BJ (cell line): ENCODE measurements at regions of chr10 and their contacts with region 1.

Region 1: DNA sequence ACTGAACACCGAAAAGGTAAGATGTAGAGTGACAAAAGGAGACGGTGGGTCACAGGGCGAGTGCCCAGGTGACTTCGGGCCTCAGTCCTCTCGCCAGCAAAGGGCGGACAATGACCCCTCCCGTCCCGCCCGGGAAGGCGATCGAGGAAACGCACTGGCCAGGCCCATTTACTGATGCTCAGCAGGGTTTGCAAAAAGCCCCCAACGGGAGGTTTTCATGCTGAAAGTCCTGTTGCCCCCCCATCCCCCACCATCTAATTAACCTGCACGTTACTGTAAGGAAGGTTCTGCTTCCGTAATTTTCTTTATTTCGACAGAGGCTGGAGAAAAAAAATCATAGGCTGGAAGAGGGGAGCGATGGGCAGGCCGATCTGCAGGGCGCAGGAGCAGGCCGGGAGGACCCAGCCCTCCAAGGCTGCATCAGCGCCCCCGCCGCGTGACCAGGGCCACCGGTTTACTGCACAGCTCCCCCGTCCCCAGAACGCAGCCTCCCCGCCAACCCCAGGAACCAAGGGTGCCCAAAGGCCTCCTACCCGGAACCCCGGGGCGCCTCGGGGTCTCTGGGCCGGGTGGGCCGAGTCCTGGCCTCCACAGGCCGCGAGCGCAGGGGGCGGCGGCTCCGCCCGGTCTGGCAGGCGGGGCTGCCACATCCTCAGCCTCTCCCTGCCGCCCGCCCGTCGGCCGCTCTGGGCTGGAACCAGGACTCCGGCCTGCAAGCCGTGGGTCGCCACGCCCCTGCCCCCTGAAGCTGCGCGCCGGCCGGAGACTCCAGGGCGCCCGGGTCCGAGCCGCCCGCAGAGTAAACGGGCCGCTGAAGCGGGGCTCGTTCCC is 613 bp downstream of the OAT start:
- DNase-seq: no peak
- H3K4me3 ChIP-seq: peak overlapping the region; percentile 82
- H3K27me3 ChIP-seq: peaks cover 4% of the 10 kb centered on the region
- CTCF ChIP-seq: no peak

Region 2: GRCh38 chr10:124231168-124232155 is 186.6 kb before region 1 on chr10:
- CTCF ChIA-PET with region 1: no interaction called
- POLR2A ChIA-PET with region 1: no interaction called
- DNase-seq: no peak
- H3K4me3 ChIP-seq: no peak overlapping the region
- H3K27me3 ChIP-seq: no peaks in the 10 kb centered on the region; the same call in 1 of the 2 replicates
- CTCF ChIP-seq: no peak

Region 3: GRCh38 chr10:124403548-124403947 is 14.6 kb before region 1 on chr10:
- CTCF ChIA-PET with region 1: interaction called, 12 read pairs
- POLR2A ChIA-PET with region 1: no interaction called
- DNase-seq: no peak
- H3K4me3 ChIP-seq: no peak overlapping the region
- H3K27me3 ChIP-seq: no peaks in the 10 kb centered on the region
- CTCF ChIP-seq: peak; percentile 69